ENCODE measurements at regions of chr18 and their contacts with region 1.

Region 1: GRCh38 chr18:51110073-51110803 is 80.2 kb downstream of the SMAD4 start:
- DNase-seq: no peak
- H3K4me3 ChIP-seq: peak overlapping the region; percentile 6; the same call in 1 of the 2 replicates
- CTCF ChIP-seq: peak; percentile 99

Region 2: GRCh38 chr18:51016903-51017879 is 93.0 kb before region 1 on chr18:
- CTCF ChIA-PET with region 1: no interaction called
- POLR2A ChIA-PET with region 1: no interaction called
- DNase-seq: no peak
- H3K4me3 ChIP-seq: no peak overlapping the region
- CTCF ChIP-seq: no peak

Region 3: GRCh38 chr18:51097021-51097822 is 13.0 kb before region 1 on chr18:
- CTCF ChIA-PET with region 1: interaction called, 12 read pairs
- POLR2A ChIA-PET with region 1: no interaction called
- DNase-seq: no peak
- H3K4me3 ChIP-seq: no peak overlapping the region
- CTCF ChIP-seq: no peak

Region 4: GRCh38 chr18:51383116-51383515 is 272.9 kb after region 1 on chr18:
- CTCF ChIA-PET with region 1: interaction called, 44 read pairs
- POLR2A ChIA-PET with region 1: no interaction called
- DNase-seq: no peak
- H3K4me3 ChIP-seq: no peak overlapping the region
- CTCF ChIP-seq: no peak

Measured in AG04449 (cell line).